Sciatic nerve (tissue), 2 donors: ENCODE measurements at regions of chr20 and their contacts with region 1.

Region 1: DNA sequence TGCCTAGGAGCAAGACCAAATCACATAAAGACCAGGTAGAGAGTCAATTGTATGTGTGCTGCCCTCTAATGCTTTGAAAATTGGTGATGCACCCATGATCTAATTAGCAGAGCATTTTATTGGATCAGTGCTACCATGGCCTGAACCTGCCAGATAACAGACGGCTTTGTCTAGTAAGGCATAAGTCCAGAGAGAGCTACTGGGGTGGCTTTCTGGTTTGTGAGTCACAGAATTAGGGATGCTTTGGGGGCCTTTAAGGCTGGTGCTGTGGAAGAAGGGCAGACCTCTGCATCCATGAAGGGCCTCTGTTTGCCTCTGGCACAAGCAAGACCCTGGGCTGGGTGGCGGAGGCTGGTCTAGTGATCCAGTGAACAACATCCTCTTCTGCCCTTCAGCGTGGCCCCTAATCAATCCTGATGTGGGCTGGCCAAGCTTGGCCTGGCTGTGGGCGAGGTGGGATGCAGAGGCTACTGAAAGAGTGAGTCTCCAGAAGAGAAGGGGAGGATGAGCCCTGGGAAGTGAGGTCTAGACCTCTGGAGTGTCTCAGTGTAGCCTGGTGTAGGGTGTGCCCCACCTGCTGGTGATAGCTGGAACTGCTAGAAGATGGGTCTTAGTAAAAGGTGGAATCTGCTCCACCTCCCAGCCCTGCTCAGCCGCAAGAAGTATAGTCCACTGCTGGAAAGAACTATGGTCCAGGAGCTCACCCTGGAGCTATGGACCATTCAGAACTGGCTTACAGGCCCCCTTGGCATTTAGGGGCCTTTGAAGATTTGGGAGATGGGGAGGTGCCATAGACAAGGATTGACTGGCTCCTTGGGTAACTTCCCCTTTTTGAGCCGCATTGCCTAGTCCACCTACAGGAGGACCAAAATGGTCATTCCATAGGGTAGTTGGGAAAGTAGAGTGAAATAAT is 36.7 kb upstream of the AAR2 start:
- DNase-seq: peak; percentile 88
- ATAC-seq: peak; percentile 83

Region 2: GRCh38 chr20:35741892-35742740 is 457.5 kb before region 1 on chr20 and contains the start of gene RBM39:
- intact Hi-C with region 1: no loop called
- DNase-seq: peak; percentile 100
- ATAC-seq: peak; percentile 98
- total RNA-seq, gene RBM39: 438 TPM

Region 3: GRCh38 chr20:35994994-35995453 is 204.6 kb before region 1 on chr20:
- intact Hi-C with region 1: loop called (anchors 5 kb)
- DNase-seq: peak; percentile 91
- ATAC-seq: peak; percentile 95

Region 4: DNA sequence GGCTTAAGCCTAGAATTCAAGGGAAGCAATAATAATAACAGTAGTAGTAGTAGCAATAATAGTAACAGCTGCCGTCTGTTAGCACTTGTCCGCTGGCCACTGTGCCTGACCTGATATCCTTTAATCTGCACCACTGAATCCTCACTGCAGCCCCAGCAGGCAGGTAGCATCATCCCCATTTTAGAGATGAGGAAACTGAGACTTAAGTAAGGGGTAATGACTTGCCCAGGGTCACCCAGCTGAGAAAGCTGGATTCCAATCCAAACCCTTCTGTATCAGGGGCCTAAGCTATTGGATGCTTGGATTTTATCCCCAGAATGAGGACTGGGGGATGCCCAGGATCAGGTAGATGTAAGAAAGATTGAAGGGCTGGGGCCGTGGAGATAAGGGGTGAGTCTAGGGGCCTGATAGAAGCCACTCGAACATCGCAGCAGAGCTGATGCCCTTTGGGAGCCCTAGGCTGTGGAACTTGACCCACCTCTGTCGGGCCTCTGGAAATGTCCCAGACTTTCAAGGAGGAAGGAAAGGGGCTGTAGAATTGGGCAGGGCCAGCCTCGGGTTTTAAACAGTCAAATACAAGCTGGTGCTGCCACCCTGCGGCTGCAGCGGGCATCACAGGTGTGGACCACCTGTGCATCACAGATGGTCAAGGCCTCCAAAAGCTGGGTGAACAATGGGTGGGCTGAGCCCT is 239.6 kb after region 1 on chr20:
- intact Hi-C with region 1: loop called (anchors 5 kb)
- DNase-seq: peak; percentile 73
- ATAC-seq: peak; percentile 19

Region 5: DNA sequence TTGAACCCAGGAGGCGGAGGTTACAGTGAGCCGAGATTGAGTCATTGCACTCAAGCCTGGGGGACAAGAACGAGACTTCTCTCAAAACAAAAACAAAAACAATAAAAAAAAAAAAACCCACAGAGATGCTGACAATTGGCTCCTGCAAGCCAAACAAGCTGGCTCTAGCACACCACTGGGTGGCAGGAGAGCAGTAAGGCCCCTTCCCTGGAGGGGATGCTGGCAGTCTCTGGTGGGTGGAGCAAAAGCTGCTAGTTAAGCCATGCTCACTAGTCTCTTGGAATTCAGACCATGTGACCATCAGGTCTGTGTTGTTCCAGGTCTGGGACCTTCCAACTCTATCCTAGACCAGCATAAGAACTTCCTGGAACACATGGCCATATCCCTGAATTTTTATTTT is 592.8 kb after region 1 on chr20:
- intact Hi-C with region 1: no loop called
- DNase-seq: no peak
- ATAC-seq: no peak